CD4-positive, alpha-beta T cell (primary cell): ENCODE measurements at regions of chr4 and their contacts with region 1.

Region 1: GRCh38 chr4:102620697-102621497 is 119.7 kb downstream of the NFKB1 start:
- DNase-seq: peak in 3 of 14 experiments; percentile 48 to 60 (median 56)
- ATAC-seq: peak; percentile 48
- H3K4me3 ChIP-seq: no peak overlapping the region
- H3K4me3 Mint-ChIP-seq: no peak overlapping the region
- H3K27ac ChIP-seq: no peak overlapping the region
- H3K27ac Mint-ChIP-seq: peak overlapping the region; percentile 34
- H3K4me1 ChIP-seq: peaks cover 16% of the 10 kb centered on the region
- H3K4me1 Mint-ChIP-seq: peaks cover 40% of the 10 kb centered on the region
- H3K27me3 ChIP-seq: no peaks in the 10 kb centered on the region
- H3K27me3 Mint-ChIP-seq: no peaks in the 10 kb centered on the region
- CTCF ChIP-seq: peak; percentile 26

Region 2: GRCh38 chr4:102430461-102430910 is 190.4 kb before region 1 on chr4:
- CTCF ChIA-PET with region 1: interaction called, 6 read pairs
- POLR2A ChIA-PET with region 1: interaction called, 3 read pairs
- intact Hi-C with region 1: loop called in 1 of 2 experiments (anchors 5 kb)
- DNase-seq: peak in 1 of 14 experiments; percentile 13
- ATAC-seq: no peak
- H3K4me3 ChIP-seq: peak overlapping the region; percentile 66
- H3K4me3 Mint-ChIP-seq: peak overlapping the region; percentile 87
- H3K27ac ChIP-seq: no peak overlapping the region
- H3K27ac Mint-ChIP-seq: peak overlapping the region; percentile 74
- H3K4me1 ChIP-seq: no peaks in the 10 kb centered on the region
- H3K4me1 Mint-ChIP-seq: peaks cover 6% of the 10 kb centered on the region
- H3K27me3 ChIP-seq: no peaks in the 10 kb centered on the region
- H3K27me3 Mint-ChIP-seq: no peaks in the 10 kb centered on the region
- CTCF ChIP-seq: no peak

Region 3: DNA sequence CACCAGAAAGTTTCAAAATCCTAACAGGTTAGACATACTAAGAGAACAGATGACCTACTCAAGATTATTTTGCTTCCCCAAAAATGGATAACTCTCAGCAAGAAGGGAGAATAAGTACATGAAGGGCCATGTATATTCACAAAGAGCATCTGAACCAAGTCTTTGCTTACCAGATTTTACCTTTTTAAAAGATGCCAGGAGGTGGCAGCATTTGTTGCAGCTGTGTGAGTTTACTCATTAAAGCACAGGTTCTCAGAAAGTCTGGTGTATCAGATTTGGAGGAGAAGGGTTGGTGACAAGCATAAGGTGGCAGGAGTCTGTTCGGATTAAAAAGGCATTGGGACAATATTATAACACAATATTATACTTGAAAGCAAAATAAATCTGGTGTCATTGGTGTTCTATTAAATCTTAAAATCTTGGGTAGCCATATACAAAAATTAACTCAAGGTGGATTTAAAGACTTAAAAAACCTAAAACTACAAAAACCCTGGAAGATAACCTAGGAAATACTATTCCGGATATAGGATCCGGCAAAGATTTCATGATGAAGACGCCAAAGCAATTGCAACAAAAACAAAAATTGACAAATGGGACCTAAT is 171.0 kb before region 1 on chr4:
- CTCF ChIA-PET with region 1: interaction called, 10 read pairs
- POLR2A ChIA-PET with region 1: interaction called, 4 read pairs
- intact Hi-C with region 1: loop called (anchors 1 kb)
- DNase-seq: peak in 13 of 14 experiments; percentile 14 to 84 (median 36)
- ATAC-seq: peak; percentile 78
- H3K4me3 ChIP-seq: no peak overlapping the region
- H3K4me3 Mint-ChIP-seq: no peak overlapping the region
- H3K27ac ChIP-seq: no peak overlapping the region
- H3K27ac Mint-ChIP-seq: no peak overlapping the region
- H3K4me1 ChIP-seq: no peaks in the 10 kb centered on the region
- H3K4me1 Mint-ChIP-seq: peaks cover 12% of the 10 kb centered on the region
- H3K27me3 ChIP-seq: no peaks in the 10 kb centered on the region
- H3K27me3 Mint-ChIP-seq: no peaks in the 10 kb centered on the region
- CTCF ChIP-seq: peak; percentile 87

Region 4: GRCh38 chr4:102578819-102579218 is 42.1 kb before region 1 on chr4:
- CTCF ChIA-PET with region 1: no interaction called
- POLR2A ChIA-PET with region 1: no interaction called
- intact Hi-C with region 1: no loop called
- DNase-seq: peak in 3 of 14 experiments; percentile 16 to 51 (median 51)
- ATAC-seq: peak; percentile 25
- H3K4me3 ChIP-seq: no peak overlapping the region
- H3K4me3 Mint-ChIP-seq: no peak overlapping the region
- H3K27ac ChIP-seq: no peak overlapping the region
- H3K27ac Mint-ChIP-seq: peak overlapping the region; percentile 55
- H3K4me1 ChIP-seq: peaks cover 14% of the 10 kb centered on the region
- H3K4me1 Mint-ChIP-seq: peaks cover 71% of the 10 kb centered on the region
- H3K27me3 ChIP-seq: no peaks in the 10 kb centered on the region
- H3K27me3 Mint-ChIP-seq: no peaks in the 10 kb centered on the region
- CTCF ChIP-seq: peak; percentile 17

Region 5: DNA sequence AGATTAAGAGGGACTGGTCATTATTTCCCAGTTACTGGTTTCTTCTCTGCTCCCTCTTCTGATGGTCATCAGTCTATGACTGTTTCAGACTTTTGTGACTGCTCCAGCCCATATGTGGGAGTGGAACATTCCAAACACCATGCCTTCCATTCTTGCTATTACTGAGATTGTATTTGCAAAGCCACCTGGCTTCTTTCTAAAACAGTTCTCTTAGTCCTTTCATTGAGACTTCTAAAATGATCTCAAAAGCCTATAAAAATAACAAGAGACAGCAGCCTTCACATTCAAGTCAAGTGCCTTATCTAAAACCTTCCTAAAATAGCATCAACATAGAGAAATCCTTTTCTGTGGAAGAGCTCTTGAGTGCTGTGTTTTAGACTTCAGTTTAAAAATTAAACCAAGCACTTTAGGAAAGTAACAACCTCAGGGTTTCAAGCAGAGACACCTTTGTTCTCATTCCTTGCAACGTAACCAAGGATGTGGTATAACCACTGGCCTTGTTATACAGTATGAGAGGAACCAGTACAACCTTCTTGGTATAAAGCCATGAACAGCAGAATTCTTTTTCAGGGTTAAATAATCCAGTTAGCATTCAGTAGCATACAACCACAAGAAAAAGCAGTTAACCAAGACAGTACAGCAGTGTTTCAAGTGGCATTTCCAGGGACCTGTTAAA is 22.7 kb before region 1 on chr4:
- CTCF ChIA-PET with region 1: interaction called, 3 read pairs
- POLR2A ChIA-PET with region 1: interaction called, 5 read pairs
- intact Hi-C with region 1: loop called in 1 of 2 experiments (anchors 2 kb)
- DNase-seq: peak in 3 of 14 experiments; percentile 61 to 86 (median 69)
- ATAC-seq: peak; percentile 89
- H3K4me3 ChIP-seq: no peak overlapping the region
- H3K4me3 Mint-ChIP-seq: peak overlapping the region; percentile 32
- H3K27ac ChIP-seq: peak overlapping the region in 1 of 2 donors; percentile 63
- H3K27ac Mint-ChIP-seq: peak overlapping the region; percentile 82
- H3K4me1 ChIP-seq: peaks cover 36% of the 10 kb centered on the region
- H3K4me1 Mint-ChIP-seq: peaks cover 74% of the 10 kb centered on the region
- H3K27me3 ChIP-seq: no peaks in the 10 kb centered on the region
- H3K27me3 Mint-ChIP-seq: no peaks in the 10 kb centered on the region
- CTCF ChIP-seq: no peak

Region 6: DNA sequence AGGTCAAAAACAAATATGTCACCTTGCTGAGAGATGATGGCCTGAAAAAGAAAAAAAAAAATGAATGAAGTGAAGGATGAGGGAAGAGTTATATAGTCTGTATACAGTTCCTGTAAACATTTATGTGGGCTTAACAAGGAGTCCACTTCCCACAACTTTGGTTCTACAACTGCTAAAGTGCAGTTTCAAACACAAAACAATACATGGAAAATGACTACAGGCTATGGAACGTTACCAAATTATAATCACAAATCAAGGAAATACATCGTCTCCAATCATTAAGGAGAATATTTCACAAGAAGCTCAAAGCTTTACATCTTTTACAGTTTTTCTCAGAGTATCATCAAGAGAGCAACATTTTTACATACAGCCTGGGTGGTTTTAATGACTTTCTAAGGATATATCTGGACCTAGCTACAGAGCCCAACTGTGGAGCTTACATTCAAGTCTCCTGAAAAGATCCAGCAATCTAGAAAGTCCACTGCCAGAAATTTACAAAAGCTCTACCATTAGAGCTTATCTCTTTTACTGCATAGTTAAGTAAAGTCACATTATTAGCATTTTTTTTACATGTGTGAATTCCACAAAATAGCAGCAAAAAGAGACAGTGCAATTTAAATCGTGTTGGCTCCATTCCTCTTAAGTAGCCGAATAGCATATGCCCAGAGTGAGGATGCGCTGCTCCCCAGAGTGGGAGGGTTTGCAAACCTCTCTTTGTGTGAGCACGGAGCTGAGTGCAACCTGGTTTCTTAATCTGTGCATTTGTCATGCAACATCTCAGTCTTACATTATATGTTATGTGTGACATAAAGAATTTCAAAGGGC is 11.6 kb after region 1 on chr4:
- CTCF ChIA-PET with region 1: interaction called, 11 read pairs
- POLR2A ChIA-PET with region 1: interaction called, 6 read pairs
- intact Hi-C with region 1: no loop called
- DNase-seq: no peak
- ATAC-seq: no peak
- H3K4me3 ChIP-seq: no peak overlapping the region
- H3K4me3 Mint-ChIP-seq: no peak overlapping the region
- H3K27ac ChIP-seq: no peak overlapping the region
- H3K27ac Mint-ChIP-seq: peak overlapping the region; percentile 94
- H3K4me1 ChIP-seq: peaks cover 20% of the 10 kb centered on the region
- H3K4me1 Mint-ChIP-seq: peaks cover 53% of the 10 kb centered on the region
- H3K27me3 ChIP-seq: no peaks in the 10 kb centered on the region
- H3K27me3 Mint-ChIP-seq: no peaks in the 10 kb centered on the region
- CTCF ChIP-seq: no peak

Region 7: DNA sequence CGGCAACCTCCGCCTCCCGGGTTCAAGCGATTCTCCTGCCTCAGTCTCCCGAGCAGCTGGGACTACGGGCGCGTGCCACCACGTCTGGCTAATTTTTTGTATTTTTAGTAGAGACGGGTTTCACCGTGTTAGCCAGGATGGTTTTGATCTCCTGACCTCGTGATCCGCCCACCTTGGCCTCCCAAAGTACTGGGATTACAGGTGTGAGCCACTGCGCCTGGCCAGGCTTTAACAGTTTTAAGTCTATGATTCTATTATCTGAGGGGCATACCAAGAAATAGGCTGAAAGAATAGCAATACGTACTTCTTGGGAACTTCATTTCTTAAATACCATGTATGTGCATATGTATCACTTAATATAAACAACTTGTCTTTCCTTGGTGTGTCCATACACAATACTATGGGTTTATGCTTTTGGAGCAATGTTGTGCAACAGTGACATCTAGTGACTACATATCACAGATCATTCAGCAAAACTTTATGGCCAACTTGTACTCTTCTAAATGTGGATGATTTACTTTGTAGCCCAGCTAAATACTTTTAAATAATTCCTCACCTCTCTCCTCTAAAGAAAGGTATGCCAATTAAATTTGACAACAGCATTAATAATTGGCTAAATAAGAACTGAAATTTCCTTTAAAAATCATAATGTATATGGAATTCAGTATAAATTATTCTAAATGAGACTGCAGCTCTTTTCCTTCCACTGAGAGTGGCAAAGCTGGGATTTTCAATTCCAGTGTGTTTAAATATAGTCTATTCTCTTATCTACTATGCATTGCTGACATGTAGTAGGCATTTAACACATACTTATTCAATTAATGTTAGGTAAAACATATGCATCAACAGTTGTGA is 388.2 kb after region 1 on chr4:
- CTCF ChIA-PET with region 1: interaction called, 4 read pairs
- POLR2A ChIA-PET with region 1: no interaction called
- intact Hi-C with region 1: loop called (anchors 1 to 2 kb)
- DNase-seq: peak in 4 of 14 experiments; percentile 33 to 84 (median 76)
- ATAC-seq: peak; percentile 96
- H3K4me3 ChIP-seq: no peak overlapping the region
- H3K4me3 Mint-ChIP-seq: no peak overlapping the region
- H3K27ac ChIP-seq: no peak overlapping the region
- H3K27ac Mint-ChIP-seq: no peak overlapping the region
- H3K4me1 ChIP-seq: no peaks in the 10 kb centered on the region
- H3K4me1 Mint-ChIP-seq: no peaks in the 10 kb centered on the region
- H3K27me3 ChIP-seq: no peaks in the 10 kb centered on the region
- H3K27me3 Mint-ChIP-seq: no peaks in the 10 kb centered on the region
- CTCF ChIP-seq: peak; percentile 77

Region 8: DNA sequence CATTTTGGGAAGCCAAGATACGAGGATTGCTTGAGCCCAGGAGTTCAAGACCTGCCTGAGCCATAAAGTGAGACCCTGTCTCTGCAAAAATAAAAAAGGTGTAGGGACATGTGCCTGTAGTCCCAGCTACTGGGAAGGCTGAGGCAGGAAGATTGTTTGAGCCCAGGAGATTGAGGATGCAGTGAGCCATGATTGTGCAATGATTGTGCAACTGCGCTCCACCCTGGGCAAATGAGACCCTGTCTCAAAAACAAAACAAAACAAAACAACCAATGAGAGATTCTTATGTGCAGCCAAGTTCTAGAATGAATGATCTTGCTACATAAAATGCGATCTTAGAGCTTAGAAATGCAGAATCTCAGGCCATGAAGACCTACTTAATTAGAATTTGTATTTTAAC is 433.1 kb after region 1 on chr4:
- CTCF ChIA-PET with region 1: no interaction called
- POLR2A ChIA-PET with region 1: no interaction called
- intact Hi-C with region 1: no loop called
- DNase-seq: no peak
- ATAC-seq: no peak
- H3K4me3 ChIP-seq: no peak overlapping the region
- H3K4me3 Mint-ChIP-seq: no peak overlapping the region
- H3K27ac ChIP-seq: no peak overlapping the region
- H3K27ac Mint-ChIP-seq: no peak overlapping the region
- H3K4me1 ChIP-seq: no peaks in the 10 kb centered on the region
- H3K4me1 Mint-ChIP-seq: no peaks in the 10 kb centered on the region
- H3K27me3 ChIP-seq: no peaks in the 10 kb centered on the region
- H3K27me3 Mint-ChIP-seq: no peaks in the 10 kb centered on the region
- CTCF ChIP-seq: no peak

Region 9: DNA sequence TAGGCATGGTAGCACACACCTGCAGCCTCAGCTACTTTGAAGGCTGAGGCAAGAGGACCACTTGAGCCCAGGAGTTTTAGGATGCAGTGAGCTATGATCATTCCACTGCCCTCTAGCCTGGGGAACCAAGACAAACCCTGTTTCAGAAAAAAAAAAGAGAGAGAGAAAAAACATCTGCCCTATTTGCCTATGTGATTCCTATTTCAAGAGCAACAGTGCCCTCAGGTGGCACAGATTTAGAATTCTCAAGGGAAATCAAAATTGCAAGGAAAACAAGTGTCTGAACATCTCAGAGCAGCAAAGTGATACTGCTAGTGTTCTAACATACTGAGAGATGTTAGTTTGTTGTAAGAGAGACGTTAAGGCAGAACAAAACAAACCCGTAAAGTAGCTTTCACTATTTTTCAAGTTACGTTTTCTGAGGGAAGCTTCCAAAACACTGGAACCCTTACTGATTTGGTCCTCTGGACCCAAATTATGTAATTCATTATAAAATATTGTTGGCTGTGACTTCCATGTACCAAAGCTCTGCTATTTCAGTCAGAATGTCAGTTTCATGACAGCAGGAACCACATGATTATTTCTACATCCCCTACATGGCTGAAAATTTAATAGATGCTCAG is 470.8 kb after region 1 on chr4:
- CTCF ChIA-PET with region 1: interaction called, 3 read pairs
- POLR2A ChIA-PET with region 1: no interaction called
- intact Hi-C with region 1: loop called (anchors 5 kb)
- DNase-seq: peak in 10 of 14 experiments; percentile 4 to 80 (median 32)
- ATAC-seq: peak; percentile 68
- H3K4me3 ChIP-seq: no peak overlapping the region
- H3K4me3 Mint-ChIP-seq: no peak overlapping the region
- H3K27ac ChIP-seq: no peak overlapping the region
- H3K27ac Mint-ChIP-seq: no peak overlapping the region
- H3K4me1 ChIP-seq: no peaks in the 10 kb centered on the region
- H3K4me1 Mint-ChIP-seq: peaks cover 15% of the 10 kb centered on the region
- H3K27me3 ChIP-seq: no peaks in the 10 kb centered on the region
- H3K27me3 Mint-ChIP-seq: no peaks in the 10 kb centered on the region
- CTCF ChIP-seq: peak; percentile 71